Left lung (tissue), 14 donors: ENCODE measurements at regions of chr3 and their contacts with region 1.

Region 1: DNA sequence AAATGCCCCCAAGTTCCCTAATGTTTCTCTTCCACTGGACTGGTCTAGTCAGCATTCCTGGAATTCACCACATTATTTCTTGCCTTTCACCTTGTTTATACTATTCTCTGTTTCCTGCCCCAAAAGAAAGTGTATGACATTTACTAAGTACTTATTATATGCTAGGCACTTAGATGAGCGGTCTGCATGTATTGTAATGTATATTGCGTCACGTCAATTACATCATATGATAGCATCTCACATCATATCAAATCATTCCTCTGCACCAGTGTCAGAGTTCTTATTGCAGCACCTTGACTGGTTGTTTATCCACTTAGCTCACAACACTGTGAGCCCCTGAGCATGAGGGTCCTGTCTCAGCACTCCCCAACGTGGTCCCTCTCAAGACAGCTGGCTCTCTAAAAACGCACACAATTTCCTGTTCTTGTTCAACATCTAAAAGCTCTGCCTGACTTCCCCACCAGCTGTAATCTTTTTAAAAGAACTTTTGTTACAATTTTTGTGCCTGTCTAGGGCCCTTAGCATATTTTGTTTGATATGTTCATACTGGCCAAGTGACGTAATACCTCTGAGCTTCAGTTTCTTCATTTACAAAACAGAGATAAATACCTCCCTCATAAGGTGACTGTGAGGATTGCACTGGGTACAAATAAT is 58.8 kb downstream of the ARHGAP31 start:
- DNase-seq: peak in 2 of 4 donors; percentile 43 to 72
- ATAC-seq: peak; percentile 78
- H3K4me3 ChIP-seq: no peak overlapping the region
- H3K27ac ChIP-seq: peak overlapping the region; percentile 56 to 69
- H3K4me1 ChIP-seq: peaks cover 18 to 60% of the 10 kb centered on the region in 2 donors
- H3K27me3 ChIP-seq: no peaks in the 10 kb centered on the region
- CTCF ChIP-seq: peak; percentile 9 to 21

Region 2: DNA sequence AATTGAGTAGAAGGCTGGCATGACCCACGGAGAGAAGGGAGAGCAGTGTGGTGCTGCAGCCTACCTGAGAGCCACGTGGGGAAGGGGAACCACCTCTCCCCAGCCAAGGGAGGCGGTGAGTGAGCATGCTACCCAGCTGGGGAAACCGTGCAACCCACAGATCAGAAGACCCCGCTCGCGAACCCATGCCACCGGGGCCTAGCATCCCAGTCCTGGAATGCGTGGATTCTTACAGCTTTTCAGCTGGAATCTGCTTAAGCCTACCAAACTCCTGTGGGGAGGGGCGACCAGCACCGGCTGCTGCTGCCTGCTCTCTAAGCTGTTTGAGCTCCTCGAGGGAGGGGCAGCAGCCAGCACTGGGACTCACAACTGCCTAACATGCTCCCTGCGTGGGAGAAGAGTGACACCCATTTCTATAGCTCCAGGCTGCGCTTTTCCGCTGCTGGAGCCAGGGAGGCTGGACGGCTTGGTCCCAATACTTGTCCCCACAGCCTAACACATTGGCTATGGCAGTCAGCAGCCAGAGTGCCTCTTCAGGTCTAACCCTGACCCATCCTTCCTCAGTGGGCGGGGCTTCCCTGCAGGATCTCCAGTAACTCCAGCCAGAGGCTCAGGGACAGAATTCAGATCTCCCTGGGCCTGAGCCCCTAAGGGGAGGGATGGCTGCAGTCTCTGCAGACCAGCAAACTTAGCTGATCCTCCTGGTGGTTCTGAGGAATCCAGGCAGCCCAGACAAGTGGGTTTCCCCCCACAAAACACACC is 227.1 kb before region 1 on chr3:
- intact Hi-C with region 1: no loop called
- DNase-seq: no peak
- ATAC-seq: no peak
- H3K4me3 ChIP-seq: no peak overlapping the region
- H3K27ac ChIP-seq: no peak overlapping the region
- H3K4me1 ChIP-seq: no peaks in the 10 kb centered on the region
- H3K27me3 ChIP-seq: no peaks in the 10 kb centered on the region
- CTCF ChIP-seq: no peak

Region 3: DNA sequence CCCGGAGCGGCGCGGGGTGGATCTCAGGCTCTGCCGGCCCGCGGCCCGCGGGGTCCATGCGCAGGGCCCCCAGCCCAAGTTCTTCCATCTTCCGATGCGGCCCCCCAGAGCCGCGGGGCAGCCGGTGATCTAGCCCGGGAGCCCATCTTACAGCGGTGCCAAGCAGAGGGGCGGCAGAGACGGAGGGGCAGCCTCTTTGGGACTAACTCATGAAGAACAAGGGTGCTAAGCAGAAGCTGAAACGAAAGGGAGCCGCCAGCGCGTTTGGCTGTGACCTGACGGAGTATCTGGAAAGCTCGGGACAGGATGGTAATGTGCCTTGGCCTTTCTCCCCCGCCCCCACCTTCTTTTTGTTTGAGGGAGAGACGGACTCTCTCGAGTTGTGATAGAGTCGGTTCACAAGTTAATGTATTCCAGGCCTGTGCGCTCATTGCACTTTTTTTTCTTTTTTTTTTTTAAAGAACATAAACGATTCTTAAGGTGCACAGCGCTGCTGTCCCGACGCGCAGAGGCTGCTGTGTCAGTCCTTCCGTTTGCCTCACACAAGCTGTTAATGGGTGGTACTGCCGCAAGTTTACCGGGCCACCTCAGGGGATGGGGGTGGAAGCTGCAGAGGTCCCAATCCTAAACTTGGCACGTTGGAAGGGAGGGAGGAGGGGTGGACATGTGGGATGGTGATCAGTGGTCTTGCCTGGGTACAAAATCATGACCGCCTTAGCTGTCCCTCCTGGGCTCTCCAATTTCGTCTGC is 58.1 kb before region 1 on chr3:
- intact Hi-C with region 1: loop called in 1 of 2 experiments (anchors 5 kb)
- DNase-seq: peak; percentile 53 to 80 (median 60)
- ATAC-seq: peak; percentile 22
- H3K4me3 ChIP-seq: peak overlapping the region; percentile 68 to 88
- H3K27ac ChIP-seq: peak overlapping the region; percentile 93 to 97
- H3K4me1 ChIP-seq: peaks cover 31 to 64% of the 10 kb centered on the region in 2 donors
- H3K27me3 ChIP-seq: no peaks in the 10 kb centered on the region
- CTCF ChIP-seq: no peak

Region 4: DNA sequence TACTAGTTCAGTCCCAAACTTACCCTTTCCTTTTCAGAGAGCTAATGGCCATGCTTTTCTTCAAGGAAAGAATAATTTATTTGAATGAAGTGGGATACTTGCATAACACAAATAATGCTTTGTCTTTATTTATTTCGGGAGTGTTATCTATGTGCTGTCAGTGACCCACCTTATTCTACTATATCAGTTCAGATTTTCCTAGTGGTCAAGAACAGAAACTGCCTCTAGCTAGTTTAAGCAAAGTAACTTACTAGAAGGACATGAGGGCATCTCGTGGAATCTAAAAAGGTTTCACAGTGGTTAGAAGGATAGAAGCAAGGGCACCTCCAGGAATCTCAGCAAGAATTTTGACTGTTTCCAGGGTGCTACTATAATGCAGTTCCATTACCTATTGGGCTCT is 141.6 kb after region 1 on chr3:
- intact Hi-C with region 1: no loop called
- DNase-seq: no peak
- ATAC-seq: no peak
- H3K4me3 ChIP-seq: no peak overlapping the region
- H3K27ac ChIP-seq: no peak overlapping the region
- H3K4me1 ChIP-seq: peaks cover 8 to 17% of the 10 kb centered on the region in 2 donors
- H3K27me3 ChIP-seq: no peaks in the 10 kb centered on the region
- CTCF ChIP-seq: no peak

Region 5: DNA sequence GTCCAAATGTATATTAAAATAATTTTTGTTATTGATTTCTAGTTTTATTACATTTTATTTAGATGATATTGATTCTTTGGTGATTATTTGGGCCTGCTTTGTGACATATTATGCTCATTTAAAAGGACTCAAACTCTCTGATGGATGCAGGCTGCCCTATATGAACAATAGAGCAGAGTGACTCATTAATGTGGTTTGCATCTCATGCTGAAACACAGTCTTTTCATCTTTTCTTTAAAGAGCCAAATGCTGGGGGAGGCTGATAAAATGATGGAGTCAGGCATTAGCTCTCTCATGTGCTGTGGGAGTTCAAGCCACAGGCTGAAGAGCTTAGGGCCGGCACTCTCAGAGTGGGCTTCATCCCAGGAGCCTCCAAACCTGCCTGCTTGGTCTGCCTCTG is 251.9 kb after region 1 on chr3:
- intact Hi-C with region 1: no loop called
- DNase-seq: no peak
- ATAC-seq: no peak
- H3K4me3 ChIP-seq: no peak overlapping the region
- H3K27ac ChIP-seq: no peak overlapping the region
- H3K4me1 ChIP-seq: peaks cover 10 to 11% of the 10 kb centered on the region in 2 donors
- H3K27me3 ChIP-seq: no peaks in the 10 kb centered on the region
- CTCF ChIP-seq: no peak

Region 6: DNA sequence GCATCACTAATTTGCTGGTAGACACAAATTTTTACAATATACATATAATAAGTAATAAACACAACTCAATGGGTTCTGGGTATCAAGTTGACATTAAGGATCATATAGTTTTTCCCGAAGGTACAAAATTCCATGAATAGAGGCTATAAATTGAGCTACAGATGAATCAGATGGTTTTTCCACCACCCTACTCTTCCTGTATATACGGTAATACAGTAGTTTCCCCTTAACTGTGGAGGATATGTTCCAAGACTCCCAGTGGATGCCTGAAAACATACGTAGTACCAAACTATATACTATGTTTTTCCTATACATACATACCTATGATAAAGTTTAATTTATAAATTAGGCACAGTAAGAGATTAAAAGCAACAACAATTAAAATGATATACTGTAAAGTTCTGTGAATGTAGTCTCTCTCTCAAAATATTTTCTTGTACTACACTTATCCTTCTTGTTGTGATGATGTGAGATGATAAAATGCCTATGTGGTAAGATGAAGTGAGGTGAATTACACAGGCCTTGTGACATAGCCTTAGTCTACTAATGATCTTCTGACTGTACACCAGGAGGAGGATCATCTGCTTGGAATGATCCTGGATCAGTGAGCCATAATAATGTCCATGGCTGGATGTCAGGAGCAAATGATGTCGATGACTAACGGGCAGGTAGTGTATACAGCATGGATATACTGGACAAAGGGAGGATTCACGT is 545.7 kb after region 1 on chr3:
- intact Hi-C with region 1: no loop called
- DNase-seq: no peak
- ATAC-seq: no peak
- H3K4me3 ChIP-seq: no peak overlapping the region
- H3K27ac ChIP-seq: no peak overlapping the region
- H3K4me1 ChIP-seq: no peaks in the 10 kb centered on the region
- H3K27me3 ChIP-seq: no peaks in the 10 kb centered on the region
- CTCF ChIP-seq: no peak